GM18951 (cell line): ENCODE measurements at regions of chr1 and their contacts with region 1.

Region 1: DNA sequence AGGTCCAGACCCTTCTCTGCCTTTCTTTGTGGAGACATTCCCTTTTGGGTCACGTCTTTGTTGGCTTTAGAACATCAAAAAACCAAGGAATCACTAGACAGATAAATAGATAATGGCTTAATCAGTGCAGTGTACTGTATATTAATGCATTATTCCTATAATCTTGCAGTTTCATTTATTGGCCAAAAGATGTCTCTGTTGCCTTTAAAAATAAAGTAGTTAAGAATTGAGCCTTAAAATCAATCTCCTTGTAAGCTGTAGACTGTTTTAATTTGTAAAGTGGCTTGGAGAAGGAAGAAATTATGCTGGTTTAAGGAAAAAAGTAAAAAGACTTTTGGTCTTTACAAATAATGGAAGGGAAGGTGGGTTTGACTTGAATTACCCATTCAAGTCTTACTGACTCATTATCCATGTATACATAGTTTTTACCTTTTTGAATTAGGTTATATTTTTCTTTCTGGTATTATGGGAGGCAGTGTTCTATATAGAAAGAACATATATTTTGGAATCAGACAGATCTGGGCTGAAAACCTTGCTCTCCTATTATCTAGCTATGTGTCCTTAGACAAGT is 84.6 kb downstream of the VPS13D start:
- POLR2A ChIP-seq: no peak

Region 2: DNA sequence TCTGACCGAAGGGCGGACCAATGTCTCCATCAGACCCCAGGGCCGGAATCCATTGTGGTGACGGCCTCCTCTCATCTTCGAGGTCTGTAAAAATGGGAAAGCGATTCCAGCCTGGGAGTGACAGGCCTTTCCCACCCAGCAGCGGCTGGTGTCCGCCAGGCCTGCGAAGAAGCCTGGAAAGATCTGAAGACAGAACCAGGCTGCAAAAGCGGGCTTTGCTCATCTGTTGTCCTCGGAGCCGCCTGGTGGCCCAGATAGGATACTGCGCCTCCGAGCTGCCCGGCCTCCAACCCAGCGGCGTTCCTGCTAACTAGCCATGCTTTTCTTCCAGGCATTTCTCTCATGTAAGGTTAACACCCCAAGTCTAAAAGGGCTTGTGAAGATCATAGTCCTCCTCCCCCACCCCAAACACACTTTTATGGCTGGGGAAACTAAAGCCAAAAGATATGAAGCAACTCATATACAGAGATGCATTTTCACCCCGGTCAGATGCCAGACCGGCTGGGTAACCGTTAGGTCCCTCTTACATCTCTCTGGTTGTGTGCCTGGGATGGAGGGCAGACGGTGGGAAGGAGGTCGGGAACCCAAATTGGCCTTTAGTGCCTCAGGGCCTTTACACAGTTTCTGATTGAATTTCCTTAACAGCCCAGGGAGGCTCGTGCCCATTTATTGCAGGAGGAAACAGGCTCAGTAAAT is 305.5 kb after region 1 on chr1:
- in situ Hi-C with region 1: loop called (anchors 25 kb)
- POLR2A ChIP-seq: no peak